Right cardiac atrium (tissue), 5 donors: ENCODE measurements at regions of chr6 and their contacts with region 1.

Region 1: DNA sequence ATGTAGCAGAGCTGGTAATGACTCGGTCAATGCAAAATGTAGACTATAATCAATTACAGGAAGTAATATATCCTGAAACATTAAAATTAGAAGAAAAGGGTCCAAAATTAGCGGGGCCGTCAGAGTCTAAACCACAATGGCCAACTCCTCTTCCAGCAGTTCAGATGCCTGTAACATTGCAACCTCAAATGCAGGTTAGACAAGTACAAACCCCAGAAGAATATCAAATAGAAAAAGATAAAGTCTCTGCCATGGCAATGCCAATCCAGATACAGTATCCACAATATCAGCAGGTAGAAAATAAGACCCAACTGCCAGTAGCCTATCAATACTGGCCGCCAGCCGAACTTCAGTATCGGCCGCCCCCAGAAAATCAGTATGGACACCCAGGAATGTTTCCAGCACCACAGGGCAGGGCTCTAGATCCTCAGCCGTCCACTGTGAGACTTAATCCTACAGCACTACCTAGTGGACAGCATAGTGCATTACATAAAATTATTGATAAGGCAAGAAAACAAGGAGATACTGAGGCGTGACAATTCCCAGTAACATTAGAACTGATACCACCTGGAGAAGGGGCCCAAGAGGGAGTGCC is 158.4 kb downstream of the GPX5 start:
- DNase-seq: no peak
- ATAC-seq: peak in 1 of 2 donors; percentile 64
- H3K4me3 ChIP-seq: peak overlapping the region; percentile 38
- H3K27ac ChIP-seq: no peak overlapping the region
- H3K4me1 ChIP-seq: no peaks in the 10 kb centered on the region
- H3K27me3 ChIP-seq: no peaks in the 10 kb centered on the region

Region 2: GRCh38 chr6:29589423-29590048 is 905.5 kb after region 1 on chr6:
- intact Hi-C with region 1: loop called (anchors 5 to 10 kb)
- DNase-seq: no peak
- ATAC-seq: peak; percentile 38 to 71
- H3K4me3 ChIP-seq: no peak overlapping the region
- H3K27ac ChIP-seq: no peak overlapping the region
- H3K4me1 ChIP-seq: no peaks in the 10 kb centered on the region
- H3K27me3 ChIP-seq: peaks cover 4% of the 10 kb centered on the region